Activated B cell treated with CpG ODN at 0.5 μM for 24 hours (primary cell): ENCODE measurements at regions of chr2 and their contacts with region 1.

Region 1: GRCh38 chr2:96856776-96857673 is 791 bp downstream of the ANKRD39 start:
- DNase-seq: no peak
- ATAC-seq: no peak
- H3K4me3 Mint-ChIP-seq: peak overlapping the region; percentile 86
- H3K27ac Mint-ChIP-seq: peak overlapping the region; percentile 63
- H3K4me1 Mint-ChIP-seq: peaks cover 16% of the 10 kb centered on the region
- H3K27me3 Mint-ChIP-seq: no peaks in the 10 kb centered on the region
- CTCF ChIP-seq: no peak

Region 2: DNA sequence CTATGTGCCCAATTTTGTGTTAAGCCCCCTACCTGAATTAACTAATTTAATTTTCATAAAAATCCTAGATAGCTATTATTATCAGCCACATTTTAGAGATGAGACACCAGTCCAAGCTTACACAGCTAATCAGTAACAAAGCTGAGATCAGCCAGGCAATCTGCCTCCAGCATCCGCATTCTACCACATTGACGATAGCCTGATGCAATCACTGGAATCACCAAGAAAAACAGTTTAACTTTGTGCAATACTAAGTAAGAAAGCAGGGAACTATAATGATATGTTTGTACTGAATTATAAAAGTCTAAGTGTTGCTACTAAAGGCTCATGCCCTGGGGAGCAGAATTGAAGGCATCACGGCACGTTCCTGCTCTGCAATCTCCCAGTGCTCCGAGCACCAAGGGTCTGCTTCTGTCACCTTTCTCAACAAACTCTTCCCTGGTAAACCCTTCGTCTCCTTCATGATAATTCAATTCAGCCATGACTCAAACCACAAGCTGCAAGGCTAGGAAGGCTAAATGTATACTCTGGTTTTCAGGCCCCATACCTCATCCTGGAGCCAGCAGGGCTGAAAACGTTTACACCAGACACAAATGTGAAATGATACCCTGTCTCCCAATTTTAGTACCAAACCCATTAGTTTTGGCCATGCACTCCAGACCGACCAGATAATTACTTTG is 238.3 kb before region 1 on chr2:
- CTCF ChIA-PET with region 1: no interaction called
- POLR2A ChIA-PET with region 1: no interaction called
- intact Hi-C with region 1: no loop called
- DNase-seq: no peak
- ATAC-seq: no peak
- H3K4me3 Mint-ChIP-seq: no peak overlapping the region
- H3K27ac Mint-ChIP-seq: no peak overlapping the region
- H3K4me1 Mint-ChIP-seq: no peaks in the 10 kb centered on the region
- H3K27me3 Mint-ChIP-seq: no peaks in the 10 kb centered on the region
- CTCF ChIP-seq: no peak

Region 3: GRCh38 chr2:96638144-96639121 is 218.6 kb before region 1 on chr2 and contains the start of gene KANSL3:
- CTCF ChIA-PET with region 1: no interaction called
- POLR2A ChIA-PET with region 1: interaction called, 5 read pairs
- intact Hi-C with region 1: loop called (anchors 1 kb)
- DNase-seq: peak; percentile 94
- ATAC-seq: peak; percentile 90
- H3K4me3 Mint-ChIP-seq: peak within 1 kb of the TSS; percentile 93
- H3K27ac Mint-ChIP-seq: peak within 1 kb of the TSS; percentile 87
- H3K4me1 Mint-ChIP-seq: peaks cover 36% of the 10 kb centered on the region
- H3K27me3 Mint-ChIP-seq: no peaks in the 10 kb centered on the region
- CTCF ChIP-seq: no peak
- total RNA-seq, gene KANSL3: 24.6 and 31.4 TPM in 2 replicates

Region 4: GRCh38 chr2:96663789-96664645 is 193.0 kb before region 1 on chr2:
- CTCF ChIA-PET with region 1: no interaction called
- POLR2A ChIA-PET with region 1: no interaction called
- intact Hi-C with region 1: no loop called
- DNase-seq: no peak
- ATAC-seq: no peak
- H3K4me3 Mint-ChIP-seq: no peak overlapping the region
- H3K27ac Mint-ChIP-seq: no peak overlapping the region
- H3K4me1 Mint-ChIP-seq: no peaks in the 10 kb centered on the region
- H3K27me3 Mint-ChIP-seq: peaks cover 2% of the 10 kb centered on the region
- CTCF ChIP-seq: no peak

Region 5: GRCh38 chr2:96760036-96760985 is 96.7 kb before region 1 on chr2 and contains the start of gene CNNM4:
- CTCF ChIA-PET with region 1: interaction called, 8 read pairs
- POLR2A ChIA-PET with region 1: interaction called, 6 read pairs
- intact Hi-C with region 1: loop called (anchors 5 kb)
- DNase-seq: peak; percentile 89
- ATAC-seq: peak; percentile 91
- H3K4me3 Mint-ChIP-seq: peak within 1 kb of the TSS; percentile 90
- H3K27ac Mint-ChIP-seq: peak within 1 kb of the TSS; percentile 89
- H3K4me1 Mint-ChIP-seq: peaks cover 49% of the 10 kb centered on the region
- H3K27me3 Mint-ChIP-seq: no peaks in the 10 kb centered on the region
- CTCF ChIP-seq: no peak
- total RNA-seq, gene CNNM4: 7.4 and 10.0 TPM in 2 replicates

Region 6: GRCh38 chr2:96839293-96839874 is 17.6 kb before region 1 on chr2:
- CTCF ChIA-PET with region 1: interaction called, 3 read pairs
- POLR2A ChIA-PET with region 1: interaction called, 14 read pairs
- intact Hi-C with region 1: loop called (anchors 1 kb)
- DNase-seq: peak; percentile 73
- ATAC-seq: peak; percentile 98
- H3K4me3 Mint-ChIP-seq: peak overlapping the region; percentile 56
- H3K27ac Mint-ChIP-seq: no peak overlapping the region
- H3K4me1 Mint-ChIP-seq: peaks cover 16% of the 10 kb centered on the region
- H3K27me3 Mint-ChIP-seq: no peaks in the 10 kb centered on the region
- CTCF ChIP-seq: no peak

Region 7: GRCh38 chr2:96874118-96874831 is 17.2 kb after region 1 on chr2:
- CTCF ChIA-PET with region 1: interaction called, 33 read pairs
- POLR2A ChIA-PET with region 1: interaction called, 27 read pairs
- intact Hi-C with region 1: loop called (anchors 1 kb)
- DNase-seq: peak; percentile 60
- ATAC-seq: peak; percentile 79
- H3K4me3 Mint-ChIP-seq: peak overlapping the region; percentile 72
- H3K27ac Mint-ChIP-seq: peak overlapping the region; percentile 57
- H3K4me1 Mint-ChIP-seq: peaks cover 26% of the 10 kb centered on the region
- H3K27me3 Mint-ChIP-seq: peaks cover 7% of the 10 kb centered on the region
- CTCF ChIP-seq: no peak

Region 8: DNA sequence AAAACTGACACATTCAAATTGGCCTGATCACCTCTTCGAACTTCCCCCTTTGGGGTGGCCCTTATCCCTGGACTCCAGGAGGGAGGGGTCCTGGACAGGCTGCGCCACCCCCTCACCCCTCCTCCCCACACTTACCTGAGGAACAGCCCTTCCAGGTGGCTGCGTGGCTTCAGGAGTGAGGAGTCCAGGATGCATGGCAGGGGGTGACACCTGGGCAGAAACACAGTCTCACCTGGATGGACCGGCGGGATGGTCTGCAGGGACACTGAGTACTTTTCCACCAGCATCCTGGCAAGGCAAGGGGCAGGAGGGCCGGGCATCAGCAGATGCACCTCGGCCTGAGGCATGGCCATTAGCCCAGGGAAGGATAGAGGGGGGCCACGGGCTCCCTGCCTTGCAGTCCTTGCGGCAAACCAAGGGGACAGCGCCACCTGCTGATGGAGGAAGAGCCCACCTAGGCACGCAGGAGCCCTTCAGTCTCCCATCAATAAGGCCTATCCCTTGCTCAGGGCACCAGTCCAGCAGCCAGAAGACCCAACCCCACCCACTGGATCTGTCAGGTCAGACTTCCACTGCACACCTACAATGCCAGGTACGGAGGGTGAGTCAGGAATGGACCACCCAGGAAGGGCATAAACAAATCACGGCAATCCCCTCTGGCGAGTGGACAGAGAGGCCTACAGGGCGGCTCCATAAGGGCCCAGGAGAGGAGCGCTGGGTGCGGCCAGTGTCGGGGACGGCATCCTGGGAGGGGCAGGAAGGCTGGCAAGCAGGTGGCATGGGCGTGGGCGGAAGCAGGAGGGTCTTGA is 103.3 kb after region 1 on chr2:
- CTCF ChIA-PET with region 1: interaction called, 27 read pairs
- POLR2A ChIA-PET with region 1: no interaction called
- intact Hi-C with region 1: loop called (anchors 1 kb)
- DNase-seq: peak; percentile 70
- ATAC-seq: peak; percentile 96
- H3K4me3 Mint-ChIP-seq: no peak overlapping the region
- H3K27ac Mint-ChIP-seq: no peak overlapping the region
- H3K4me1 Mint-ChIP-seq: peaks cover 13% of the 10 kb centered on the region
- H3K27me3 Mint-ChIP-seq: no peaks in the 10 kb centered on the region
- CTCF ChIP-seq: peak; percentile 66

Region 9: GRCh38 chr2:97663965-97664635 is 807.1 kb after region 1 on chr2 and contains the start of gene ACTR1B:
- CTCF ChIA-PET with region 1: no interaction called
- POLR2A ChIA-PET with region 1: no interaction called
- intact Hi-C with region 1: loop called (anchors 5 kb)
- DNase-seq: peak; percentile 93
- ATAC-seq: peak; percentile 89
- H3K4me3 Mint-ChIP-seq: peak within 1 kb of the TSS; percentile 92
- H3K27ac Mint-ChIP-seq: peak within 1 kb of the TSS; percentile 91
- H3K4me1 Mint-ChIP-seq: peaks cover 28% of the 10 kb centered on the region
- H3K27me3 Mint-ChIP-seq: no peaks in the 10 kb centered on the region
- CTCF ChIP-seq: no peak
- total RNA-seq, gene ACTR1B: 55.0 and 55.9 TPM in 2 replicates

Region 10: DNA sequence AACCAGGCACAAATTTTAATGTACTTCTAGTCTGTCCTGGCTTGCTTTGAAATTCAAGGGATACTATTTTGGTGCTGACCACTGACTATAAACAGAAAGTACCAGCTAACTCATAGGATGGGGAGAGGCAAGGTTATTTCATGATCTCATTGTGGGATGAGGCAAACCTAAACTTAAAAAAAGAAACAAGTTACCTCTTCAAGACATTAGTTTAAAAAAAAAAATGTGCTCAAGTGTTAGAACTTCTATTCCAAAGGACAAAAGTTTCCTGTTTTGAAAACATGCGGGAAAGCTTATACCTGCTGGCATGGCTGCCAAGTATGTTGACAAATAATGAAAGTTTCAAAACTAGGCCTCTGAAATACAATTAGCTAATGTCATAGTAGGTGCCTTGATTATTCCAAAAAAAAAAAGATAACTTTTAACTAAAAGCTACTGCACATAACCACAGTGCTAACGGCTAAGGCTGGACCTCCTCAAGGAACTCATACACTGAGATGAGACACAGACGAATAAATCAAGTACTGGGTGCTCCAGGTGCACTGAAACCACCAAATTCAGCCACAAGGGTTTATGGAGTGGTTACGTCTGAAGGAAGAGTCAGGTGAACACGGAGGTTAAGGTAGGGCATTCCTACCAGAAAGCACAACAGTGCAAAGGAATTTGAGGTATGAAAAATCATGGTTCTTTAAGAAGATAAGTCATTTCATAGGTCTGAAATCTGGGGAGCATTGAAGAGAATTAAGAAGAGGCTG is 1100.6 kb after region 1 on chr2:
- CTCF ChIA-PET with region 1: no interaction called
- POLR2A ChIA-PET with region 1: no interaction called
- intact Hi-C with region 1: no loop called
- DNase-seq: no peak
- ATAC-seq: peak; percentile 47
- H3K4me3 Mint-ChIP-seq: peak overlapping the region; percentile 36
- H3K27ac Mint-ChIP-seq: peak overlapping the region; percentile 64
- H3K4me1 Mint-ChIP-seq: peaks cover 88% of the 10 kb centered on the region
- H3K27me3 Mint-ChIP-seq: no peaks in the 10 kb centered on the region
- CTCF ChIP-seq: no peak